Activated naive CD4-positive, alpha-beta T cell treated with anti-CD3 and anti-CD28 coated beads, Interleukin-2, amount 10 ng/mL, durations not matched to agents 7 days and 5 days (primary cell): ENCODE measurements at regions of chr20 and their contacts with region 1.

Region 1: DNA sequence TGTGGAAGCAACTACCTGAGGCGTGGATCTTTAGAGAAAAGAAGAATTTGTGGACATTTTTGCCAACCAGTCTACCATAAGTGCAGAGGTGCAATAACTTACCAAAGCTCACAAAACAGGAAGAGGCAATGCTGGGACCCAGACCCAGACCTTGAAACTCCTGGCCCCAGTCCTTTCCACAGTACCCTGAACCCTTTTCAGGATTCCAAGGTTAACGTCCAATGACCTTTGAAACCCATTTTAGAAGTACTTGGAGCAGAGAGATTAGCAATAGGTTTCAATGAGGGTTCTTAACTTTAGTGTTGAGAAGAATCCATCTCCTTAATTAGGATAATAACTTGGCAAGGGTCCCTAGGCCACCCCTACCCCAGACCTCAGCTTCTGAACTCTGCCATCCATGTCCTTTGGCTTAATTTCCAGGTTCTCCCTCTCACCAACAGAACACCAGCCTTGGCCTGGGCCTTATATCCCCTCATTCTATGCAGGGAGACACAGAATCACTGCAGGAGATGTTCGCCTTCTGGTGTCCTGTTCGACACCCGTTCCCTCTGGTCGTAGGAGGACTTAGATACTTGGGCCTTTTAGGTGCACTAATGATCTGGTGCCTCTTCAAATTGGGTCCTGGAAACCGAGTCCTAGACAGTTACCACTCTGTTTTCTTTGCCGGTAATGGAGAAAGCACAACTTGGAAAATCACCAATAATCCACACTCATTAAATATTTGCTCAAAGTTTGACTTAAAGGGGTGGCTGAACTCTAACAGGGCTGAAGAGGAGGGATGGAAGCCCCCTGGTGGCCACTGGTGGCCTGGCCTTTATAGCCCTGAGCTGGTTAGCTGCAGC is 40.6 kb downstream of the ISM1 start:
- DNase-seq: peak; percentile 80
- H3K4me3 Mint-ChIP-seq: no peak overlapping the region
- H3K27ac Mint-ChIP-seq: no peak overlapping the region
- H3K4me1 Mint-ChIP-seq: peaks cover 6% of the 10 kb centered on the region
- H3K27me3 Mint-ChIP-seq: peaks cover 9% of the 10 kb centered on the region

Region 2: GRCh38 chr20:13251106-13251903 is 10.4 kb before region 1 on chr20:
- CTCF ChIA-PET with region 1: interaction called, 31 read pairs
- DNase-seq: no peak
- H3K4me3 Mint-ChIP-seq: no peak overlapping the region
- H3K27ac Mint-ChIP-seq: no peak overlapping the region
- H3K4me1 Mint-ChIP-seq: peaks cover 31% of the 10 kb centered on the region
- H3K27me3 Mint-ChIP-seq: peaks cover 4% of the 10 kb centered on the region

Region 3: GRCh38 chr20:13397300-13397724 is 135.6 kb after region 1 on chr20:
- CTCF ChIA-PET with region 1: no interaction called
- DNase-seq: no peak
- H3K4me3 Mint-ChIP-seq: no peak overlapping the region
- H3K27ac Mint-ChIP-seq: no peak overlapping the region
- H3K4me1 Mint-ChIP-seq: no peaks in the 10 kb centered on the region
- H3K27me3 Mint-ChIP-seq: no peaks in the 10 kb centered on the region